Heart right ventricle (tissue), 16 donors: ENCODE measurements at regions of chr11 and their contacts with region 1.

Region 1: GRCh38 chr11:1837171-1838076 is 1.4 kb upstream of the TNNI2 start:
- DNase-seq: peak; percentile 71 to 78
- ATAC-seq: peak; percentile 29 to 71 (median 58)
- H3K4me3 ChIP-seq: no peak overlapping the region
- H3K27ac ChIP-seq: peak overlapping the region in 2 of 10 donors; percentile 34 to 60
- H3K4me1 ChIP-seq: peaks cover 6 to 41% (median 25%) of the 10 kb centered on the region in 9 donors
- H3K27me3 ChIP-seq: no peaks in the 10 kb centered on the region
- CTCF ChIP-seq: peak; percentile 89 to 97 (median 92)

Region 2: GRCh38 chr11:369336-370018 is 1467.9 kb before region 1 on chr11 and contains the start of gene B4GALNT4:
- intact Hi-C with region 1: loop called in 1 of 10 experiments (anchors 5 kb)
- DNase-seq: no peak
- ATAC-seq: peak in 2 of 8 donors; percentile 46 to 49
- H3K4me3 ChIP-seq: peak within 1 kb of the TSS in 6 of 10 donors; percentile 11 to 28 (median 21)
- H3K27ac ChIP-seq: no peak within 1 kb of the TSS
- H3K4me1 ChIP-seq: peaks cover 0 to 10% (median 8%) of the 10 kb centered on the region in 9 donors
- H3K27me3 ChIP-seq: peaks cover 2 to 65% (median 57%) of the 10 kb centered on the region in 7 donors
- CTCF ChIP-seq: no peak
- total RNA-seq, gene B4GALNT4: 0.09 to 1.6 (median 0.25) TPM in 7 of 10 donors, not detected in the others

Region 3: DNA sequence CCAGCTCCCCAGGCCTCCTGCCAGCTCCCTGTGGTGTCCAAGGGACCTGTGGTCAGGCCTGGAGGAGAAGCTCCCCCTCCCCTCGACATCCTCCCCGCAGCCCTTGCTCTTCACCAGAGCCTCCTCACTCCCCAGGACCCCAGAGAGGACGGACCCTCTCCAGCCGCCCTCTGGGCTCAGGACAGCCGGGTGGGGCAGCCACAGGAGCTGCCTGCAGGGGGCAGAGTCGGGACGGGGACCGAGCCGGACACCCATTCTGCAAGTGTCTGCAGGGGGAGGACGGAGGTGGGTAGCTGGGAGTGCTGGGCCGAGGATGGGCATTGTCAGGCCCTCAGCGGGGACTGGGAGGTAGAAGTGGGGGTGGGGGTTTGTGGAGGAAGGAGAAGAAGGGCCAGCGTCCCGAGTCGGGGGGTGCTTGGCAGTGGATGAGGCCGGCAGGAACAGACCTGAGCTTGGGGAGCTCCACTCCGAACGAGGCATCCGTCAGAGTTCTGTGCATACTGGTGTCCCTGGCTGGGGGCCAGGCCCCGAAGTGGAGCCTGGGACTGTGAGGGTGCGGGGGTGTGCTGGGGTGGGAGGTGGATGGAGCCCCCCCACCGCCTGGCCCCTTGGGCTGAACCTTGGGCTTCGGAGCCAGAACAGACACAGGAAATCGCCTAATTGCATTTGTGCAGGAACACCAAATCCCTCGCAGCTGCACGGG is 39.1 kb after region 1 on chr11:
- intact Hi-C with region 1: loop called in 6 of 10 experiments (anchors 2 to 5 kb)
- DNase-seq: peak; percentile 79 to 81
- ATAC-seq: peak in 7 of 8 donors; percentile 10 to 47 (median 27)
- H3K4me3 ChIP-seq: peak overlapping the region in 8 of 10 donors; percentile 11 to 30 (median 23)
- H3K27ac ChIP-seq: peak overlapping the region; percentile 76 to 100 (median 94)
- H3K4me1 ChIP-seq: peaks cover 31 to 78% (median 62%) of the 10 kb centered on the region in 9 donors
- H3K27me3 ChIP-seq: no peaks in the 10 kb centered on the region
- CTCF ChIP-seq: peak; percentile 44 to 74 (median 63)

Region 4: GRCh38 chr11:1882519-1883238 is 45.3 kb after region 1 on chr11:
- intact Hi-C with region 1: loop called in 6 of 10 experiments (anchors 2 to 5 kb)
- DNase-seq: peak; percentile 86 to 91
- ATAC-seq: peak; percentile 72 to 88 (median 84)
- H3K4me3 ChIP-seq: no peak overlapping the region
- H3K27ac ChIP-seq: peak overlapping the region; percentile 88 to 100 (median 96)
- H3K4me1 ChIP-seq: peaks cover 32 to 57% (median 46%) of the 10 kb centered on the region in 9 donors
- H3K27me3 ChIP-seq: no peaks in the 10 kb centered on the region
- CTCF ChIP-seq: peak; percentile 87 to 96 (median 94)